ENCODE measurements at regions of chr3 and their contacts with region 1.

Region 1: DNA sequence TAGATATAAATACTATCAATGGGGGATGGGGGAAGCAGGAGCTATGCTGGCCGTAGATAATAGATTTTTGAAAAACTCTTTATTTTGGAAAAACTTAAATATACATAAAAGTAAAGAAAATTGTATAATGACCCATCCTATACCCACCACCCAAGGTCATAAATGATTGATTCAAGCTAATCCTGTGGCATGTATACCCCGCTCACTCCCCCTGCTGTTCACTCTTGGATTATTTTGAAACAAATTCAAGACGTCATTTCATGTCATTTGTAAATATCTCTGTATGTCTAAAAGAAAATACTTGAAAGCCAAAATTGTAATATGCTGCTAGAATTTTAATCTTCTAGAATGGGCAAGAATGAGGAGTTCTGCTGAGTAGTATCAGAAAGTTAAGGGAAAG is 241.8 kb downstream of the FEZF2 start:
- DNase-seq: no peak
- ATAC-seq: peak; percentile 61
- H3K4me3 ChIP-seq: no peak overlapping the region
- H3K27ac ChIP-seq: no peak overlapping the region
- H3K4me1 ChIP-seq: no peaks in the 10 kb centered on the region
- H3K27me3 ChIP-seq: no peaks in the 10 kb centered on the region
- CTCF ChIP-seq: peak in 2 of 3 experiments; percentile 26 to 34; a peak in 2 of 6 replicates
- EP300 ChIP-seq: no peak
- POLR2A ChIP-seq: no peak
- RAD21 ChIP-seq: 0 out of 2 replicates have a peak, but pooled peaks have one; percentile 19

Region 2: DNA sequence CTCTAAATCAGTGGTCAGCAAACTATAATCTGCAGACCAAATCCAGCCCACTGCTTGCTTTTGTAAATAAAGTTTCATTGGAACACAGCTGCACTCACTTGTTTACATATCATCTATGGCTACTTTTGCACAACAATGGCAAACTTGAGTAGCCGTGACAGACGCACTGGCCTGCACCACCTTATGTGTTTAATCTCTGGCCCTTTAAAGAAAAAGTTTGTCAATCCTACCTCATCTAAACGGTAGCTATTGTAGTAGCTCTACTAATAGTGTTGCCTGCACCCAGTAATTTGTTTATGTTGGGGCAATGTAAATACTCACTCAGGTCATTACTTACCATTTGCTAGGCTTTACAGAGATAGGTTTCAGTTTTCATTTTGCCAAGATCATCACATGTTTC is 12.4 kb after region 1 on chr3:
- CTCF ChIA-PET with region 1: interaction called, 5 read pairs
- POLR2A ChIA-PET with region 1: interaction called, 3 read pairs
- RAD21 ChIA-PET with region 1: no interaction called
- SMC1A ChIA-PET with region 1: interaction called, 14 read pairs
- in situ Hi-C with region 1: no loop called
- intact Hi-C with region 1: no loop called
- DNase-seq: no peak
- ATAC-seq: peak; percentile 77
- H3K4me3 ChIP-seq: no peak overlapping the region
- H3K27ac ChIP-seq: no peak overlapping the region
- H3K4me1 ChIP-seq: no peaks in the 10 kb centered on the region
- H3K27me3 ChIP-seq: no peaks in the 10 kb centered on the region
- CTCF ChIP-seq: no peak
- EP300 ChIP-seq: no peak
- POLR2A ChIP-seq: no peak
- RAD21 ChIP-seq: no peak

Region 3: DNA sequence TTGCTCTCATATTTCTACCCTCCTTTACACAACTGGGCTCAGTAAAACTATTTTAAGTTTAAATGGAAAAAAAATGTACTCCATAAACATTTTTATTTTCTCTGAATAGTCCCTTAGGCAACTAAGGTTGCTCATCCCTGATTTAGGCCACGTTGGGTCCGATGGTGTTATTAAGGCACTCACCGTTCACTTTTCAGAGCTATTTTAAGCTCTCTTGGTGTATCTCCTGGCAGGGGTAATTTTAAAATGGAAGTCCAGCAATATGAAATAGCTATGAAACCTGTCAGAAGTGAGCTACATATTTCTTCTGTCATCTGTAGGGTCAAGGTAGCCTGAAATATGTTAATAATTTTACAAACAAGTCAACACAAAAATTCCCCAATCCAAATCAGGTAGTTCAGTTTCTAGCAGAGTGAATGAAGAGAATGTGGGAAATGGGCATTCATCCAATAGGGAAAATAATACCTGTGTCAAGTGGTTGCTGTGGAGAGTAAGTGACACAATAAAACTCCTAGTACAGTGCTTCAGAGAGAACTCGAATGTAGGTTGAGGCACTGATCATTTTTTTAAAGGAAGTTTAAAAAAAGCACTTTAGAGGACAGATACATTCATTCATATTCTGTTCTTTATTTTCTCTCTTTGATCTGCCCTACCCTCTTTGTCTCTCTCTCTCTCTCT is 451.0 kb after region 1 on chr3:
- CTCF ChIA-PET with region 1: no interaction called
- POLR2A ChIA-PET with region 1: no interaction called
- RAD21 ChIA-PET with region 1: no interaction called
- SMC1A ChIA-PET with region 1: no interaction called
- in situ Hi-C with region 1: no loop called
- intact Hi-C with region 1: no loop called
- DNase-seq: no peak
- ATAC-seq: no peak
- H3K4me3 ChIP-seq: no peak overlapping the region
- H3K27ac ChIP-seq: no peak overlapping the region
- H3K4me1 ChIP-seq: no peaks in the 10 kb centered on the region
- H3K27me3 ChIP-seq: no peaks in the 10 kb centered on the region
- CTCF ChIP-seq: no peak
- EP300 ChIP-seq: no peak
- POLR2A ChIP-seq: no peak
- RAD21 ChIP-seq: no peak

Region 4: DNA sequence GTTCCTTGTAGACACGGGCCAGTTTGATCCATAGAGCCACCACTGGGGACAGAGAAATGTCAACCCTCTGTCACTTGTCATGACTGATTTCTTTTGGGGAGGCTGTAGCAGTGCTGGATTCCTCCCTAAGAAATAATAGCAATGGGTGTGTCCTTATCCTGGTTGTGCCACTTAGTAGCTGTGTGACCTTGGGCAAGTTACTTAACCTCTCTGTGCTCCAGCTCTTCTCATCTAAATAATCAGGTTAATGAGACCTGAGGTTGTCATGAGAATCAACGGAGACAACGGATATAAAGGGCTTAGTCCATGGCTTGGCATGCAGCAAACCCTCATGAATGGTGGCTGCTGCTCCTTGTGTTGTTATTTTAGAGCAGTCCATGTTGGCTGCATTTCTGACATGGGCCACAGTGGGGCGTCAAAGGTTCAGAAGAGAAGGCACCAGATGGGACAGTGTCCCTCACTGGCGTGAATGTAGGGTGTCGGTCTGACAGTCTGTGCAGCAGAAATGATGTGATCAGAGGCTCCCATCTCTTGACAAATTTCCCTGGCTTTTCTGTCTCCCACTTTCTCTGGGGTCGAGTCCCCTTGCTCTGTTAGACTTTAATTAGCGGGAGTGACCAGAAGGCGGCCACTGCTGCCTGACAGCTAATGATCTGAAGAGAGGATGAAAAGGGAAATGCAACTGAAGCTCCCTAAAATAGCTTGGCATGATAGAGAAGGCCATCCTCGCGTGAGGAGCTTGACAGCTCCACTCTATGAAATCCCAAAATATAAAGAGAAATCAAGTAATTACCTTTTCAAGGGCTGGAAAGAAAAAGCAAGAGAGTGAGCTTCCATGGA is 534.2 kb after region 1 on chr3:
- CTCF ChIA-PET with region 1: no interaction called
- POLR2A ChIA-PET with region 1: no interaction called
- RAD21 ChIA-PET with region 1: no interaction called
- SMC1A ChIA-PET with region 1: no interaction called
- in situ Hi-C with region 1: no loop called
- intact Hi-C with region 1: no loop called
- DNase-seq: peak; percentile 2
- ATAC-seq: peak; percentile 93
- H3K4me3 ChIP-seq: no peak overlapping the region
- H3K27ac ChIP-seq: no peak overlapping the region
- H3K4me1 ChIP-seq: no peaks in the 10 kb centered on the region
- H3K27me3 ChIP-seq: no peaks in the 10 kb centered on the region; a peak in 1 of 4 replicates
- CTCF ChIP-seq: peak; percentile 65 to 67 (median 66)
- EP300 ChIP-seq: no peak
- POLR2A ChIP-seq: no peak
- RAD21 ChIP-seq: peak; percentile 78

Region 5: GRCh38 chr3:63159024-63159423 is 1027.4 kb after region 1 on chr3:
- CTCF ChIA-PET with region 1: no interaction called
- POLR2A ChIA-PET with region 1: no interaction called
- RAD21 ChIA-PET with region 1: no interaction called
- SMC1A ChIA-PET with region 1: no interaction called
- in situ Hi-C with region 1: no loop called
- intact Hi-C with region 1: no loop called
- DNase-seq: no peak
- ATAC-seq: no peak
- H3K4me3 ChIP-seq: no peak overlapping the region
- H3K27ac ChIP-seq: no peak overlapping the region
- H3K4me1 ChIP-seq: no peaks in the 10 kb centered on the region
- H3K27me3 ChIP-seq: no peaks in the 10 kb centered on the region
- CTCF ChIP-seq: no peak
- EP300 ChIP-seq: no peak
- POLR2A ChIP-seq: no peak
- RAD21 ChIP-seq: no peak

Measured in GM12878 (cell line).